CD4-positive, alpha-beta memory T cell (primary cell): ENCODE measurements at regions of chr3 and their contacts with region 1.

Region 1: GRCh38 chr3:39126532-39127071 is 19.1 kb downstream of the TTC21A start:
- DNase-seq: no peak
- H3K4me3 ChIP-seq: no peak overlapping the region
- H3K4me3 Mint-ChIP-seq: peak overlapping the region in 1 of 8 donors; percentile 4
- H3K27ac ChIP-seq: no peak overlapping the region
- H3K27ac Mint-ChIP-seq: peak overlapping the region in 4 of 7 donors; percentile 49 to 78 (median 64)
- H3K4me1 ChIP-seq: peaks cover 22% of the 10 kb centered on the region
- H3K4me1 Mint-ChIP-seq: peaks cover 11 to 43% (median 24%) of the 10 kb centered on the region in 4 donors
- H3K27me3 ChIP-seq: no peaks in the 10 kb centered on the region
- H3K27me3 Mint-ChIP-seq: no peaks in the 10 kb centered on the region

Region 2: GRCh38 chr3:38985581-38985980 is 141.0 kb before region 1 on chr3:
- CTCF ChIA-PET with region 1: no interaction called
- POLR2A ChIA-PET with region 1: no interaction called
- intact Hi-C with region 1: no loop called
- DNase-seq: no peak
- H3K4me3 ChIP-seq: no peak overlapping the region
- H3K4me3 Mint-ChIP-seq: no peak overlapping the region
- H3K27ac ChIP-seq: no peak overlapping the region
- H3K27ac Mint-ChIP-seq: no peak overlapping the region
- H3K4me1 ChIP-seq: no peaks in the 10 kb centered on the region
- H3K4me1 Mint-ChIP-seq: no peaks in the 10 kb centered on the region
- H3K27me3 ChIP-seq: peaks cover 3% of the 10 kb centered on the region
- H3K27me3 Mint-ChIP-seq: peaks cover 8 to 17% of the 10 kb centered on the region in 2 donors

Region 3: GRCh38 chr3:39107388-39108199 is 19.0 kb before region 1 on chr3 and contains the starts of genes GORASP1 and TTC21A:
- CTCF ChIA-PET with region 1: interaction called, 30 read pairs
- POLR2A ChIA-PET with region 1: interaction called, 8 read pairs
- intact Hi-C with region 1: no loop called
- DNase-seq: peak; percentile 58 to 87 (median 70)
- H3K4me3 ChIP-seq: peak within 1 kb of the TSS; percentile 67 to 71
- H3K4me3 Mint-ChIP-seq: peak within 1 kb of the TSS; percentile 87 to 99 (median 94)
- H3K27ac ChIP-seq: peak within 1 kb of the TSS; percentile 76
- H3K27ac Mint-ChIP-seq: peak within 1 kb of the TSS; percentile 88 to 99 (median 96)
- H3K4me1 ChIP-seq: peaks cover 45% of the 10 kb centered on the region
- H3K4me1 Mint-ChIP-seq: peaks cover 37 to 60% (median 49%) of the 10 kb centered on the region in 4 donors
- H3K27me3 ChIP-seq: no peaks in the 10 kb centered on the region
- H3K27me3 Mint-ChIP-seq: no peaks in the 10 kb centered on the region
- total RNA-seq, gene GORASP1: 57.1 to 58.4 TPM
- total RNA-seq, gene TTC21A: 3.0 to 3.9 TPM

Region 4: DNA sequence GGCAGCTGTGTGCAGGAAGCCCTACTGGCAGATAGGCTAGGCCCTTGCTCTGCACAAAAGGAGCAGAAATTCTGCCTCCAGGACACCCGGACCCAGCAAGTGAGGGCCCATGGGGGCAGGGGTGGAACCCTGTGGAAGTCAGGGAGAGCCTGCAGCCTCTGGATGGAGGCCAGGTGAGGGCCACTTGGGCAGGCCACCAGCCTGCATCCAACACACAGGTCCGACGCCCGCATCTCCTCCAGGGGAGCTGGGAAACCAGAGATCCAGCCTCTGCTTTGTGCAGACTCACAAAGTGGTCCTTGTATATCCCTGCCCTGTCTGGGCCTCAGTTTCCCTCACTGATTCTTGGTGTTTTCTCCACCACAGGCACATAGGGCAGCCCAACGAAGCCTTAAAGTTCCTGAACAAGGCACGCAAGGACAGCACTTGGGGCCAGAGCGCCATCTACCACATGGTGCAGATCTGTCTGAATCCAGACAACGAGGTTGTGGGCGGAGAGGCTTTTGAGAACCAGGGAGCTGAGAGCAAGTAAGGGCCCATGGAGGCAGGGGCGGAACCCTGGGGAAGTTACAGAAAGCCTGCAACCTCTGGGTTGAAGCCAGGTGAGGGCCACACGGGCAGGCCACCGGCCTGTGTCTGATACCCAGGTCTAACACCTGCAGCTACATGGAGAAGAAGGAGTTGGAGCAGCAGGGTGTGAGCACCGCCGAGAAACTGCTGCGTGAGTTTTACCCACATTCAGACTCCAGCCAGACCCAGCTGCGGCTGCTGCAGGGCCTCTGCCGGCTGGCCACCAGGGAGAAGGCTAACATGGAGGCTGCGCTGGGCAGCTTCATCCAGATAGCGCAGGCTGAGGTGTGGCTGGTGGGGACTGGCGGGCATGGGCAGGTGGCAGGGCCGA is 10.2 kb after region 1 on chr3:
- CTCF ChIA-PET with region 1: interaction called, 10 read pairs
- POLR2A ChIA-PET with region 1: no interaction called
- intact Hi-C with region 1: no loop called
- DNase-seq: no peak
- H3K4me3 ChIP-seq: no peak overlapping the region
- H3K4me3 Mint-ChIP-seq: no peak overlapping the region
- H3K27ac ChIP-seq: no peak overlapping the region
- H3K27ac Mint-ChIP-seq: peak overlapping the region in 2 of 7 donors; percentile 25 to 97
- H3K4me1 ChIP-seq: peaks cover 3% of the 10 kb centered on the region
- H3K4me1 Mint-ChIP-seq: peaks cover 0 to 30% (median 5%) of the 10 kb centered on the region in 4 donors
- H3K27me3 ChIP-seq: no peaks in the 10 kb centered on the region
- H3K27me3 Mint-ChIP-seq: no peaks in the 10 kb centered on the region

Region 5: DNA sequence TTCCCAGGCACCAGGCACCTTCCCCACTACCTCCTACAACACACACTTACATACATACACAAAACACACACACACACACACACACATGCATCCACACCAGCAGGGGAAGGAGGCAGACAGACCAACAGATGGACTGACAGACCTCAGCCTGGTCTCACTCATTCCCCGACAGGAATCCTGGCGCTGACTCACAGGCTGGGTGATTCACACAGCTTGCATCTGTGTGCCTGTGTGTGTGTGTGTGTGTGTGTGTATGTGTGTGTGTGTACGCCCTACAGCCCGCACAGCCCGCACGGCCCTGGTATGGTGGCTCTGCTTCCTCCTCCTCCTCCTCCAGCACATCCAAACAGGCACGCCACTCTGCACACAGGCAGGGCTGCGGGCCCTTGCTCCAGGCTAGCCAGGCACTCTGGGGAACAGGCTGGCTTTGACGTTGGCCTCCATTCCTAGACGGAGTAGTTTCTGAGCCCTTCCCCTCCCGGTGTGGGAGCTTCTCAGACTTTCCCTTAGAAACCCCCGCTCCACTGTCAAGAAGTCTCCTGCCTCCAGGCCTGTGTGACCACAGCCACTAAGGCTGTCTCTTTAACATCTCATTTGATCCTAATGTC is 20.5 kb after region 1 on chr3:
- CTCF ChIA-PET with region 1: interaction called, 30 read pairs
- POLR2A ChIA-PET with region 1: interaction called, 4 read pairs
- intact Hi-C with region 1: no loop called
- DNase-seq: peak in 3 of 5 donors; percentile 48 to 85 (median 57)
- H3K4me3 ChIP-seq: peak overlapping the region; percentile 25 to 26
- H3K4me3 Mint-ChIP-seq: peak overlapping the region; percentile 79 to 99 (median 86)
- H3K27ac ChIP-seq: peak overlapping the region; percentile 69
- H3K27ac Mint-ChIP-seq: peak overlapping the region; percentile 97 to 100 (median 99)
- H3K4me1 ChIP-seq: peaks cover 63% of the 10 kb centered on the region
- H3K4me1 Mint-ChIP-seq: peaks cover 57 to 94% (median 68%) of the 10 kb centered on the region in 4 donors
- H3K27me3 ChIP-seq: no peaks in the 10 kb centered on the region
- H3K27me3 Mint-ChIP-seq: no peaks in the 10 kb centered on the region

Region 6: DNA sequence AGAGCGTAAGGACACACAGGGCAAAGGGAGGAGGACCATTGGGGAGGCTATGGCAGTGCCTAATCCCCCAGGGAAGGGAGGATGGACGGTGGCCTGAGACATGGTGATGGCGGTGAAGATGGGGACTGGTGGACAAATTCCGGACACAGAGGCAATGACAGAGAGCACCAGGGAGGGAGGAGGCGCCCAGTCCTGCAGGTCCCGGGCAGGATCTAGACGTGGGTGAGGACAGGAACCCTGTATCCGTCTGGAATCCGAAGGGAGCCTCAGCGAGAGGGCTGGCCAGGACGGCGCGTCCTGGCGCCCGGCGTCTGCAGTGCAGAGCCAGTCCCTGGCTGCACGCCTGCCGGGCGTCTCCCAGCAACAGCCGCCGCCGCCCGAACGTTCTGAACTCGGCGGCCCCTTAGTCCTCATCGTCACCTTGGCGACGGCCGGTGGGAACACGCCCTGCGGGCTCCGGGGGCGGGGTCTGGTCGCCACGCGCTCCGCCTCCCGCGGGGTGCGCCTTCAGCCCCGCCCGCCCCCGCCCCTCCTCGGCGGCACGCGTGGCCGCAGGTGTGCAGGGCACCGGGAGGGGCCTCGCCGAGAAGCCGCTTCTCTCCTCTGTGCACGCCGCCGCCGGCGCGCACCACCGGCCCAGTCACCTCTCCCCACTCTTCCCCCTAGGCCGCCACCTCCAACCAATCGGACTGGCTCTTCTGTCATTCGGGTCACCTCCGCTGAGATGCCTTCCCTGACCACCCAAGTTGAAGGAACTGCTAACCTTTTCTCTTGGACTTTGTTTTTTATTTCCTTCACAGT is 54.1 kb after region 1 on chr3:
- CTCF ChIA-PET with region 1: interaction called, 21 read pairs
- POLR2A ChIA-PET with region 1: interaction called, 3 read pairs
- intact Hi-C with region 1: no loop called
- DNase-seq: peak; percentile 89 to 93 (median 91)
- H3K4me3 ChIP-seq: peak overlapping the region; percentile 39 to 54
- H3K4me3 Mint-ChIP-seq: peak overlapping the region; percentile 79 to 92 (median 84)
- H3K27ac ChIP-seq: peak overlapping the region; percentile 67
- H3K27ac Mint-ChIP-seq: peak overlapping the region; percentile 68 to 99 (median 96)
- H3K4me1 ChIP-seq: peaks cover 38% of the 10 kb centered on the region
- H3K4me1 Mint-ChIP-seq: peaks cover 35 to 52% (median 37%) of the 10 kb centered on the region in 4 donors
- H3K27me3 ChIP-seq: no peaks in the 10 kb centered on the region
- H3K27me3 Mint-ChIP-seq: no peaks in the 10 kb centered on the region

Region 7: DNA sequence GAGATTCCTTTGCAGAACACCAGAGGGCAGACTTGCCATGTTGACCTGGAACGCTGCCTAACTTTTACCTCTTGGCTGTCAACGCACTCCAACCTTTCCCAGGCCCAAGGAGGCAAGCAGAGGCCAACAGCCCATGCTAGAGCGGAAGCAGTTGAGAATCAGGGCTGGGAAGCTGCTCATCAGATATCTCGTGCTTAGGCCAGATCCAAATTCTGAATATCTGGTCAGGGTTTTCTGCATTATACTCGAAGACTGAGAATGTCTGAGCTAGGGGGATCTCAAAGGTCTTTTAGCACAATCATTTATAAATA is 63.3 kb after region 1 on chr3:
- CTCF ChIA-PET with region 1: interaction called, 62 read pairs
- POLR2A ChIA-PET with region 1: no interaction called
- intact Hi-C with region 1: loop called (anchors 1 kb)
- DNase-seq: peak; percentile 60 to 65 (median 64)
- H3K4me3 ChIP-seq: no peak overlapping the region
- H3K4me3 Mint-ChIP-seq: no peak overlapping the region
- H3K27ac ChIP-seq: no peak overlapping the region
- H3K27ac Mint-ChIP-seq: peak overlapping the region in 6 of 7 donors; percentile 2 to 89 (median 66)
- H3K4me1 ChIP-seq: no peaks in the 10 kb centered on the region
- H3K4me1 Mint-ChIP-seq: peaks cover 0 to 7% (median 5%) of the 10 kb centered on the region in 4 donors
- H3K27me3 ChIP-seq: no peaks in the 10 kb centered on the region
- H3K27me3 Mint-ChIP-seq: peaks cover 0 to 1% of the 10 kb centered on the region in 2 donors